ENCODE measurements at regions of chr9 and their contacts with region 1.

Region 1: GRCh38 chr9:21110708-21111576 is 30.7 kb downstream of the IFNW1 start:
- DNase-seq: peak; percentile 74
- H3K4me3 ChIP-seq: no peak overlapping the region
- H3K27ac ChIP-seq: no peak overlapping the region
- H3K4me1 ChIP-seq: no peaks in the 10 kb centered on the region
- H3K27me3 ChIP-seq: no peaks in the 10 kb centered on the region
- CTCF ChIP-seq: peak; percentile 57 to 58
- POLR2A ChIP-seq: no peak

Region 2: DNA sequence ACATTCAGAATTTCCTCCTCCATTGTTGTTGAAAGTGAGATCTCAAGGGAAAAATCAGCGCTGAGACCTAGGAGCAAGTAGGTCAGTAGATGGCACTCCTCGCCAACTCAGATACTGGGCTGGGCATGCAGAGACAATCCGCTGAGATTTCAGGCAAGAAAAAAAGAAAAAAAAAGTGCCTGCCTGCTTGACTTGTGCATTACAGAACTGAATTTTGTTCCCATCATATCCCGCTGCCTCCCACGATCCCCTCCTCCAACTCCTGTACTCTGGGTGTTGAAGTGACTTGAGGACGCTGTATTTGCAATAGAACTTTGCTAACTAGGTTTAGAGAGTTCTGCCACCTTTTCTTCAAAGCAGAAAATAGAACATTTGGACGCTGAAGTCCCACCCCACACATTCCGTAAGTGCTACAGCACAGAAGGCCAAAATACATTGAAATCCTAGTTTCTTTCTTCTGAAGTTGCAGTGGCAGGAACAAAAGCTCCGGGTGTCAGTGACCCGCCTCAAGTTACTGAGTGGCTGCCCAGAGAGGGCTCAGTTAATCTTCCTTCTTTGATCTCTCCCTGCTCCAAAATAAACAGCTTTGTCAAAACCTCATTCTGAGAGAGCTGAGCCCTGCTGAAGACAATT is 754.4 kb before region 1 on chr9:
- CTCF ChIA-PET with region 1: interaction called, 67 read pairs
- POLR2A ChIA-PET with region 1: no interaction called
- dilution Hi-C with region 1: no loop called
- intact Hi-C with region 1: loop called (anchors 1 kb)
- DNase-seq: peak; percentile 96
- H3K4me3 ChIP-seq: peak overlapping the region in 2 of 3 experiments; percentile 13 to 53
- H3K27ac ChIP-seq: peak overlapping the region; percentile 32
- H3K4me1 ChIP-seq: peaks cover 19% of the 10 kb centered on the region
- H3K27me3 ChIP-seq: no peaks in the 10 kb centered on the region
- CTCF ChIP-seq: peak; percentile 66 to 82
- POLR2A ChIP-seq: no peak

Region 3: DNA sequence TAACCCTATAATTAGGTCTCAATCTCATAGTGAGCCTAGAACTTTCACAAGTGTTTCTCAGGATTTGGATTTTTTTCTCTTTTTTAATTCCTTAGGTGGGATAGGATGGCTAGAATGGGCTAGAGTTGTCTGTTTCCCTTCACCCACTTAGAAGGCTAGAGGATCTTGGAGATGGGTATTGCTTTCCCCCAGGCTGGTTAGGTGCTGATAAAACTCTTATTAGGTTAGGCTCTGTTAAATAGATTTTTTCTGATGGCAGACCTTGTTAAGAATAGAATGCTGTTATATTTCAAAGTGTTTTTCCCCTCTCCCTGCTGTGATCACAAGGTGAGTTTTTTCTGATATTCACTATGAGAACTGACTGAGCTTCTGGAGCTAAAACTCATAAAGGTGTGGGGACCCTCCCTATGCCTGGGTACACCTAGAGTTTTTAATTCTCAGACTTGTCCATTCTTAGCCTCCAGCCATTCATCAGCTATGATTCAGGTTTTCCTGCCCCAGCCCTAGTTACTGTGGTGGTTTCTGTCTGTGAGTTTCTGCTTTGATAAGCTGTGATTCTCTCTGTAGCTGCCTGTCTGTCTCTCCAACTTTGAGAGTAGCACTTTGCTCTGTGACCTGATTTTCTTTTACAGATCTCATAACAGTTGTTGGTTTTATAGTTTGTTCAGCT is 211.9 kb before region 1 on chr9:
- CTCF ChIA-PET with region 1: interaction called, 12 read pairs
- POLR2A ChIA-PET with region 1: no interaction called
- dilution Hi-C with region 1: no loop called
- intact Hi-C with region 1: no loop called
- DNase-seq: peak; percentile 70
- H3K4me3 ChIP-seq: no peak overlapping the region
- H3K27ac ChIP-seq: no peak overlapping the region
- H3K4me1 ChIP-seq: peaks cover 13% of the 10 kb centered on the region
- H3K27me3 ChIP-seq: no peaks in the 10 kb centered on the region
- CTCF ChIP-seq: no peak
- POLR2A ChIP-seq: no peak

Region 4: GRCh38 chr9:20962536-20963225 is 148.3 kb before region 1 on chr9:
- CTCF ChIA-PET with region 1: interaction called, 10 read pairs
- POLR2A ChIA-PET with region 1: no interaction called
- dilution Hi-C with region 1: no loop called
- intact Hi-C with region 1: no loop called
- DNase-seq: no peak
- H3K4me3 ChIP-seq: no peak overlapping the region
- H3K27ac ChIP-seq: no peak overlapping the region
- H3K4me1 ChIP-seq: no peaks in the 10 kb centered on the region
- H3K27me3 ChIP-seq: no peaks in the 10 kb centered on the region
- CTCF ChIP-seq: no peak
- POLR2A ChIP-seq: no peak

Region 5: GRCh38 chr9:21070171-21070571 is 40.8 kb before region 1 on chr9:
- CTCF ChIA-PET with region 1: interaction called, 14 read pairs
- POLR2A ChIA-PET with region 1: no interaction called
- dilution Hi-C with region 1: no loop called
- intact Hi-C with region 1: no loop called
- DNase-seq: peak; percentile 97
- H3K4me3 ChIP-seq: no peak overlapping the region
- H3K27ac ChIP-seq: peak overlapping the region; percentile 57
- H3K4me1 ChIP-seq: peaks cover 14% of the 10 kb centered on the region
- H3K27me3 ChIP-seq: peaks cover 0 to 2% of the 10 kb centered on the region in 2 experiments
- CTCF ChIP-seq: peak; percentile 31 to 56
- POLR2A ChIP-seq: no peak

Region 6: GRCh38 chr9:21434202-21435014 is 323.5 kb after region 1 on chr9:
- CTCF ChIA-PET with region 1: no interaction called
- POLR2A ChIA-PET with region 1: no interaction called
- dilution Hi-C with region 1: no loop called
- intact Hi-C with region 1: no loop called
- DNase-seq: peak; percentile 68
- H3K4me3 ChIP-seq: no peak overlapping the region
- H3K27ac ChIP-seq: no peak overlapping the region
- H3K4me1 ChIP-seq: no peaks in the 10 kb centered on the region
- H3K27me3 ChIP-seq: peaks cover 22 to 56% of the 10 kb centered on the region in 2 experiments
- CTCF ChIP-seq: peak; percentile 41 to 59
- POLR2A ChIP-seq: no peak

Region 7: GRCh38 chr9:22954550-22954949 is 1843.6 kb after region 1 on chr9:
- CTCF ChIA-PET with region 1: no interaction called
- POLR2A ChIA-PET with region 1: no interaction called
- dilution Hi-C with region 1: no loop called
- intact Hi-C with region 1: no loop called
- DNase-seq: no peak
- H3K4me3 ChIP-seq: no peak overlapping the region
- H3K27ac ChIP-seq: no peak overlapping the region
- H3K4me1 ChIP-seq: no peaks in the 10 kb centered on the region
- H3K27me3 ChIP-seq: no peaks in the 10 kb centered on the region
- CTCF ChIP-seq: no peak
- POLR2A ChIP-seq: no peak

Measured in endothelial cell of umbilical vein (primary cell).